Thyroid gland (tissue), 4 donors: ENCODE measurements at regions of chr3 and their contacts with region 1.

Region 1: DNA sequence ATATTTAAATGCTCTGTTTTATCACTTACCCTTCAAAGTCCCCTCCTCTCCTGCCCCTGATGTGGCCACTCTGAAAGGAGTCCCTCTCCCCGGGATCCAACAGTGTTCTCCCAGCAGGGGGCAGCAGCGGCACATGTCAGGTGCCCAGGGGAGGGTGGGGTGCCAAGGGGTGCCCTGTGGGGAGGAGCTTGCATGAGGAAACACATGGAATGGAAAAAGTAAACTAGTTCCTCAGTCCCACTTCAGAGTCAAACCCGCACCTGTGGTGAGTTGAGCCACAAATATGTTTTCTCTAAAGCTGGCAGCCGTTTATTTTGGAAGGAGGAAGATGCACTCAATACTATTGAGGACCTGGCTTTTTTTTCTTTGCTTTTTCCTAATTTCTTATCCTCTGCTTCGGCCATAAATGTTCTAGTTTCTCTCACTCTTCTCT is 30.1 kb upstream of the NRROS start:
- DNase-seq: peak; percentile 87 to 91
- H3K4me3 ChIP-seq: no peak overlapping the region
- H3K27ac ChIP-seq: no peak overlapping the region
- H3K4me1 ChIP-seq: peaks cover 4 to 22% of the 10 kb centered on the region in 2 donors
- H3K27me3 ChIP-seq: no peaks in the 10 kb centered on the region
- CTCF ChIP-seq: peak; percentile 52 to 86 (median 81)
- POLR2A ChIP-seq: no peak

Region 2: DNA sequence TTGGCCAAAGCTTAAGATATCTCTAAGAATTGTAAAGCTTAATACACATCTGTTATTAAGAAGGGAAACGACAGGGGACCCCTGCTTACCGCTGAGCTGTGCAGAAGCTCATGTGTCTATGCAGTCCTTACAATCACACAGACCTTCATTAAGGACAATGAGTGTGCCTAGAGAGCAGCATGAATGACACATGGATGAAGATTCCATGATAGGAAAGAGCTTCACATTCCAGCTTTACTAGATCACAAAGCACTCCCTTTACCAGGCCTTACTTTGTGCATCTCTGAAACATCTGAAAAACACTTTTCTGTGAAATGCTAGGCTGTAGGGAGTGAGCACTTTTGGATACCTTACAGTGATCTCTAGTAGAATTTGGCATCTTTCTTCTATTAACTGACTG is 137.8 kb before region 1 on chr3:
- intact Hi-C with region 1: no loop called
- DNase-seq: no peak
- H3K4me3 ChIP-seq: no peak overlapping the region
- H3K27ac ChIP-seq: no peak overlapping the region
- H3K4me1 ChIP-seq: no peaks in the 10 kb centered on the region
- H3K27me3 ChIP-seq: no peaks in the 10 kb centered on the region
- CTCF ChIP-seq: no peak
- POLR2A ChIP-seq: no peak

Region 3: GRCh38 chr3:196684548-196685407 is 75.4 kb after region 1 on chr3:
- intact Hi-C with region 1: loop called (anchors 2 kb)
- DNase-seq: peak; percentile 57 to 60
- H3K4me3 ChIP-seq: no peak overlapping the region
- H3K27ac ChIP-seq: no peak overlapping the region
- H3K4me1 ChIP-seq: peaks cover 0 to 4% of the 10 kb centered on the region in 2 donors
- H3K27me3 ChIP-seq: no peaks in the 10 kb centered on the region
- CTCF ChIP-seq: peak; percentile 64 to 92 (median 81)
- POLR2A ChIP-seq: no peak